Activated T-helper 1 cell treated with anti-CD3 and anti-CD28 coated beads, Interleukin-12 subunit alpha, Interleukin-12 subunit beta, Interleukin-2, Interleukin-4 antibody, amounts not matched to agents 30 ng/mL and 10 ng/mL and 1 ng/mL, durations not matched to agents 14 hours and 24 hours and 36 hours (primary cell): ENCODE measurements at regions of chr20 and their contacts with region 1.

Region 1: DNA sequence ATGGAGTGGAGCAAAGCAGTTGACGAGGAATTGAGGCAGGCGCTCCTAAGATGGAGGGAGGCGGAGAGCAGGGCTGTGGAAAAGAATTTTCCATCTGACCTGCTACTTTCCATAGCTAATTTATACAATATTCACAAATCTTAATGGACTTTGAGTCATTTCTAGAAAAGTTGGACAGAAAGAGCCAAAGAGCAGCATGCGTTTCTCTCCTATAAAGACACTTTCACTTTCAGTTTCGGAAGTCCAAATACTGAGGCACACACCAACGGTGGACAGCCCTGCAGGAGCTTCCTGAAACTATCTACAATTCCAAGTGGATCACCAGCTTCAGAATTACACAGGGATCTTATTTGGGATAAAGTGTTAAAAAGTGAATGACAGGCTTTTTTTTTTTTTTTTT is 43.5 kb downstream of the PANK2 start:
- DNase-seq: no peak
- H3K4me3 Mint-ChIP-seq: peak overlapping the region; percentile 26
- H3K27ac Mint-ChIP-seq: peak overlapping the region; percentile 44
- H3K4me1 Mint-ChIP-seq: peaks cover 30% of the 10 kb centered on the region
- H3K27me3 Mint-ChIP-seq: no peaks in the 10 kb centered on the region

Region 2: DNA sequence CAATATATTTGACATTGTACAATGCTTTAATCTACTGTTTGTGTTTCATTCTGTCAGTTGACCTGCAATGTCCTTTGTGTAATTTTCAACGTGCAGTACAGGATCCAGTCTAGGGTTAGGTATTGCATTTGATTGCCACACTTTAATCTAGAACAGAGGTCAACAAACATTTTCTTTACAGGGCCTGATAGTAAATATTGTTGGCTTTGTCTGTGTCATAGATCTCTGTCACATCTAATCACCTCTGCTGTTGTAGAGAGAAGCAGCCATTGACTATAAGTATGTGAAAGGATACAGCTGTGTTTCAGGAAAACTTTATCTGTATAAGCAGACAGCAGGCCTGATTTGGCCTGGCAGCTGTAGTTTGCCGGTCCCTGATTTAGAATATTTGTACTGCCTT is 422.6 kb before region 1 on chr20:
- intact Hi-C with region 1: no loop called
- DNase-seq: no peak
- H3K4me3 Mint-ChIP-seq: no peak overlapping the region
- H3K27ac Mint-ChIP-seq: no peak overlapping the region
- H3K4me1 Mint-ChIP-seq: no peaks in the 10 kb centered on the region
- H3K27me3 Mint-ChIP-seq: no peaks in the 10 kb centered on the region

Region 3: GRCh38 chr20:3980260-3981131 is 47.8 kb after region 1 on chr20:
- intact Hi-C with region 1: loop called (anchors 2 kb)
- DNase-seq: no peak
- H3K4me3 Mint-ChIP-seq: peak overlapping the region; percentile 78
- H3K27ac Mint-ChIP-seq: peak overlapping the region; percentile 91
- H3K4me1 Mint-ChIP-seq: peaks cover 22% of the 10 kb centered on the region
- H3K27me3 Mint-ChIP-seq: no peaks in the 10 kb centered on the region